ENCODE measurements at regions of chr9 and their contacts with region 1.

Region 1: GRCh38 chr9:130444565-130445221 is at the start of gene ASS1:
- DNase-seq: peak; percentile 53 to 56
- ATAC-seq: peak; percentile 59 to 62
- H3K4me3 ChIP-seq: peak within 1 kb of the TSS; percentile 62 to 80 (median 75)
- H3K27ac ChIP-seq: peak within 1 kb of the TSS; percentile 77 to 86 (median 80)
- H3K4me1 ChIP-seq: peaks cover 25 to 40% of the 10 kb centered on the region in 2 donors
- H3K27me3 ChIP-seq: no peaks in the 10 kb centered on the region
- CTCF ChIP-seq: no peak
- POLR2A ChIP-seq: peak; percentile 75 to 77
- total RNA-seq, gene ASS1: 44.5 to 83.4 (median 68.5) TPM

Region 2: DNA sequence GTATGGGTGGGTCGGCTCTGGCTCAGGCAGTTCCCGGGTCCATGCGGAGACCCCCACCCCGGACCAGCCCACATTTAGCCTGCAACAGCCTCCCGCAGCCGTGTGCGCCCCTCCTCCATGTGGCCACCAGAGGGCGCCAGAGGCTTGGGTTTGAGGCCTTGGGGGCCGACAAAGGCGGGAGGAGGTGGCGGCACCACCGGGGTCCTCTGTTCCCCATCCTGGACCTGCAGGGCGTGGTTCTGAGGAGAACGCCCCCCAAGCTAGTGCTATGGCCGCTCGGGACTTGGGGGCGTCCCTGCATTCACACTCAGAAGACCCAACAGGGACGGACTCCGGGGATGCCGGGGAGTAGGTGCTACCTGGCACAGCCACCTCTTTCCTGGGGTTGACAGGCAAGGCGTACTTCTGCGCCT is 16.5 kb after region 1 on chr9:
- in situ Hi-C with region 1: no loop called
- intact Hi-C with region 1: no loop called
- DNase-seq: peak in 1 of 2 donors; percentile 35
- ATAC-seq: peak in 1 of 2 donors; percentile 30
- H3K4me3 ChIP-seq: no peak overlapping the region
- H3K27ac ChIP-seq: no peak overlapping the region
- H3K4me1 ChIP-seq: no peaks in the 10 kb centered on the region
- H3K27me3 ChIP-seq: no peaks in the 10 kb centered on the region
- CTCF ChIP-seq: peak; percentile 70 to 95 (median 94)
- POLR2A ChIP-seq: no peak

Region 3: GRCh38 chr9:130512199-130512598 is 67.5 kb after region 1 on chr9:
- in situ Hi-C with region 1: no loop called
- intact Hi-C with region 1: no loop called
- DNase-seq: no peak
- ATAC-seq: no peak
- H3K4me3 ChIP-seq: no peak overlapping the region
- H3K27ac ChIP-seq: no peak overlapping the region
- H3K4me1 ChIP-seq: no peaks in the 10 kb centered on the region
- H3K27me3 ChIP-seq: peaks cover 0 to 9% (median 7%) of the 10 kb centered on the region in 3 donors
- CTCF ChIP-seq: no peak
- POLR2A ChIP-seq: no peak

Region 4: DNA sequence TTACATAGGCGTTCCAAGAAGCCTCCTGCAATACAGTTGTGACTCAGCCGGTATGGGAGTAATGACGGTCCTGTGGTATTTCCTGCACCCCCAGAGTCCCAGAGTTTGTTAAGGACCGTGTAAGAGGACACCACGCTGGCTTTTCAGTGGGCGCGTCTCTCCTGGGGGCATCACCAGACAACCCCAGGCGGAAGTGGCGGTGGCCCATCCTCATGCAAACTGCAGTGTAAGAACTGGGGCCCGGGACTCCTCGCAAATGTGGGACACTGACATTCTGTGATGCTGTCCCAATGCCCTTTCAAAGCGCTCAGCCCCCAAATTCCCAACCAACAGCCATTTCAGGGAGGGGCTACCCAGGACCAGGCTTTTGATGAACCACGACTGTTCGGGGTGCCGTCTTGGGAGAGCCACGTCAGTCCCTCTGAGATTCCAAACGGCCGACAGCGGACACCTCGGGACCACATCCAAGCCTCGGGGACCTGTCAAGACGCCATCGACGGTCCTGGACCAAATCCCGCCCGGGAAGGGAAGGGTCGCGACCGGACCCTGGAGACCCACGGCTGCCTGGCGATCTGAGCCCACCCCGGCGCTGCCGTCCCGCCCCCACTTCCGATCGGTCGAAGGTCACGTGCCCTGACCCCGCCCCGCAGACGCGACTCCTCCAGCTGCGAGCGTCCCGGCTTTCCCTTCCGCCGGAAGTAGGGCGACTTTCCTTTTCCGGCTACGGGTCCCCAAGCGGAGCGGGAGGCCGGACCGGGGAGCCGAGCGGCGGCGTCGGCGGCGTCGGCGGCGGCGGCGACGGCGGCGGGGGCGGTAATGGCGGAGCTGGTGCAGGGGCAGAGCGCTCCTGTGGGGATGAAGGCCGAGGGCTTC is 134.4 kb after region 1 on chr9 and contains the start of gene FUBP3:
- in situ Hi-C with region 1: no loop called
- intact Hi-C with region 1: loop called (anchors 5 kb)
- DNase-seq: peak; percentile 89 to 90
- ATAC-seq: peak; percentile 97 to 98
- H3K4me3 ChIP-seq: peak within 1 kb of the TSS; percentile 81 to 98 (median 94)
- H3K27ac ChIP-seq: peak within 1 kb of the TSS; percentile 87 to 94 (median 91)
- H3K4me1 ChIP-seq: peaks cover 21 to 32% of the 10 kb centered on the region in 2 donors
- H3K27me3 ChIP-seq: no peaks in the 10 kb centered on the region
- CTCF ChIP-seq: peak in 1 of 5 experiments; percentile 10
- POLR2A ChIP-seq: peak; percentile 78 to 96
- total RNA-seq, gene FUBP3: 10.4 to 75.1 (median 13.0) TPM

Region 5: GRCh38 chr9:130834371-130835311 is 389.9 kb after region 1 on chr9 and contains the start of gene ABL1:
- in situ Hi-C with region 1: no loop called
- intact Hi-C with region 1: loop called (anchors 10 kb)
- DNase-seq: peak; percentile 48 to 63
- ATAC-seq: peak; percentile 81 to 82
- H3K4me3 ChIP-seq: peak within 1 kb of the TSS; percentile 72 to 79 (median 75)
- H3K27ac ChIP-seq: peak within 1 kb of the TSS; percentile 86 to 90 (median 88)
- H3K4me1 ChIP-seq: peaks cover 56 to 68% of the 10 kb centered on the region in 2 donors
- H3K27me3 ChIP-seq: no peaks in the 10 kb centered on the region
- CTCF ChIP-seq: peak in 1 of 5 experiments; percentile 14
- POLR2A ChIP-seq: peak in 1 of 2 donors; percentile 9
- total RNA-seq, gene ABL1: 22.8 to 55.5 (median 28.5) TPM